Left cardiac atrium (tissue), 4 donors: ENCODE measurements at regions of chr15 and their contacts with region 1.

Region 1: GRCh38 chr15:95259513-95259912 is 1028.2 kb downstream of the MCTP2 start:
- DNase-seq: peak; percentile 68
- ATAC-seq: peak; percentile 78 to 85

Region 2: DNA sequence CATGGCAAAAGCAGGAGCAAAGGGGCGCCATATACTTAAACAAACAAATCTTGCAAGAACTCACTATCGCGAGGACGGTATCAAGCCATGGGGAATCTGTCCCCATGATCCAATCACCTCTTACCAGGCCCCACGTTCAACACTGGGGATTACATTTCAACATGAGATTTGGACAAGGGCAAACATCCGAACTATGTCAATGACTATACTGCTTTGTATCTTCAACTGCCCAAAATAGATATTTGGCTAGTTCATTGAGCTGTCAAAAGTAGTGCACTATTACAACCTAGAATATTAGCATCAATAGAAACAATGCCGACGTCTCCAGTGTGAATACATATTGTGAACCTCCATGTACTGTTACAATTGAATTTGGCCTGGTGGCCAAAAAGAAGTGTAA is 267.8 kb before region 1 on chr15:
- intact Hi-C with region 1: no loop called
- DNase-seq: no peak
- ATAC-seq: no peak

Region 3: DNA sequence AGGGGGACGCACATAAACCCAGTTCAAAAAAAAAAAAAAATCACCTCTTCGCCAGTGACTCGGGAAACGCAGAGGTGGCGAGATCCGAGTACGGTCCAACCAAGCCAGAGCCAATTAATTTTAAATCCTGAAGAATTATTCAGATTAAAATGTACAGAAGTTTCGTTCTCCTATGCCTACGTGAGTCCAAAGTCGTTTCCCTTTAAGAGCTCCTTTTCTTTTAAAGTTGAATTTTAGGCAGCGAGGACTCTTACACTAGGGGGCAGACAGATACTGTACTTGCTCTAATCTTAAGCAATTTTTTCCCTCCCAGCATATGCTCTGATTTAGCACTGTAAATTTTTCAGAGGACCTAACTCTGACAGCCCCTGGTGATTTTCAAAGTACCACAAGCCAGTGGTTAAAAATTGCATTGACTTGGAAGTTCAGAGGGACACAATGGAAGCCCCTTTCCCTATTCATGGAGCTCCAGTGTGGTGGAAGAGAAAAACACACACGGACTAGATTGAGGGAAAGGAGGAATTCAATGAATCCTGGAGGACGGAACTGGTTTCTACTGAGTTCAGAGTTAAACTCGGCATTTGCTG is 1067.7 kb after region 1 on chr15:
- intact Hi-C with region 1: loop called in 1 of 2 experiments (anchors 10 kb)
- DNase-seq: no peak
- ATAC-seq: peak; percentile 29 to 44

Region 4: GRCh38 chr15:96345560-96346399 is 1086.3 kb after region 1 on chr15:
- intact Hi-C with region 1: loop called in 1 of 2 experiments (anchors 5 kb)
- DNase-seq: peak; percentile 88
- ATAC-seq: peak; percentile 73 to 83

Region 5: GRCh38 chr15:96585484-96586386 is 1326.2 kb after region 1 on chr15:
- intact Hi-C with region 1: loop called in 1 of 2 experiments (anchors 5 kb)
- DNase-seq: no peak
- ATAC-seq: no peak

Region 6: GRCh38 chr15:97234851-97235610 is 1975.5 kb after region 1 on chr15:
- intact Hi-C with region 1: loop called in 1 of 2 experiments (anchors 10 kb)
- DNase-seq: peak; percentile 41
- ATAC-seq: peak in 1 of 2 donors; percentile 70